ENCODE measurements at regions of chr17 and their contacts with region 1.

Region 1: GRCh38 chr17:7856883-7857723 is at the start of gene NAA38:
- DNase-seq: peak; percentile 80 to 100 (median 96)
- ATAC-seq: peak; percentile 78 to 91
- H3K4me3 Mint-ChIP-seq: no peak within 1 kb of the TSS
- H3K27ac Mint-ChIP-seq: no peak within 1 kb of the TSS
- H3K4me1 Mint-ChIP-seq: peaks cover under 1 to 17% (median 12%) of the 10 kb centered on the region in 4 donors
- H3K27me3 Mint-ChIP-seq: no peaks in the 10 kb centered on the region
- polyA plus RNA-seq, gene NAA38: 125 to 169 (median 152) TPM

Region 2: DNA sequence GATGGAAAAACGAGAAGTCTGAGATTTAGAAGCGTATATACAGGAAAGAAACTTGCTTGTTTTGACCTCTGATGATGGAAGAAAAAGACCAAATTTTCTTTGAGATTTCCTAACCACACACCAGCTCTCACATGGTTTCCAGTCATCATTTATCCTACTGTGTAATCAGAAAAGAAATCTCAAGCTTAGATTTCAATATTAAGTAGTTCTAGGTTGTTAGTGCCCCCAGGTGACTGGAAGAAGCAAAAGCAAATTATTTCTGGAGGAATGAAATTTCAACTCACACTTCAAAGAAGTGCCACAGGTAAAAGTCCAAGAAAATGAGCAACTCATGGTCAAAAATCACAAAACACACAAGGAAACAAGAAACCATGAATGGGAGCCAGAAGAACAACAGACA is 74.9 kb before region 1 on chr17:
- POLR2A ChIA-PET with region 1: no interaction called
- DNase-seq: no peak
- ATAC-seq: no peak
- H3K4me3 Mint-ChIP-seq: no peak overlapping the region
- H3K27ac Mint-ChIP-seq: no peak overlapping the region
- H3K4me1 Mint-ChIP-seq: no peaks in the 10 kb centered on the region
- H3K27me3 Mint-ChIP-seq: peaks cover 0 to 15% (median 3%) of the 10 kb centered on the region in 5 donors

Region 3: GRCh38 chr17:7834962-7835813 is 21.9 kb before region 1 on chr17:
- POLR2A ChIA-PET with region 1: interaction called, 103 read pairs
- DNase-seq: peak; percentile 77 to 97 (median 95)
- ATAC-seq: peak; percentile 54 to 64
- H3K4me3 Mint-ChIP-seq: peak overlapping the region; percentile 96 to 99 (median 98)
- H3K27ac Mint-ChIP-seq: peak overlapping the region; percentile 95 to 100 (median 100)
- H3K4me1 Mint-ChIP-seq: peaks cover 44 to 55% (median 47%) of the 10 kb centered on the region in 4 donors
- H3K27me3 Mint-ChIP-seq: peaks cover 0 to 2% (median 0%) of the 10 kb centered on the region in 5 donors

Region 4: GRCh38 chr17:7844292-7845154 is 12.6 kb before region 1 on chr17:
- POLR2A ChIA-PET with region 1: interaction called, 54 read pairs
- DNase-seq: peak; percentile 62 to 89 (median 78)
- ATAC-seq: peak; percentile 20 to 32
- H3K4me3 Mint-ChIP-seq: peak overlapping the region; percentile 88 to 100 (median 96)
- H3K27ac Mint-ChIP-seq: peak overlapping the region; percentile 94 to 100 (median 98)
- H3K4me1 Mint-ChIP-seq: peaks cover 34 to 52% (median 40%) of the 10 kb centered on the region in 4 donors
- H3K27me3 Mint-ChIP-seq: peaks cover 0 to 6% (median 0%) of the 10 kb centered on the region in 5 donors

Region 5: DNA sequence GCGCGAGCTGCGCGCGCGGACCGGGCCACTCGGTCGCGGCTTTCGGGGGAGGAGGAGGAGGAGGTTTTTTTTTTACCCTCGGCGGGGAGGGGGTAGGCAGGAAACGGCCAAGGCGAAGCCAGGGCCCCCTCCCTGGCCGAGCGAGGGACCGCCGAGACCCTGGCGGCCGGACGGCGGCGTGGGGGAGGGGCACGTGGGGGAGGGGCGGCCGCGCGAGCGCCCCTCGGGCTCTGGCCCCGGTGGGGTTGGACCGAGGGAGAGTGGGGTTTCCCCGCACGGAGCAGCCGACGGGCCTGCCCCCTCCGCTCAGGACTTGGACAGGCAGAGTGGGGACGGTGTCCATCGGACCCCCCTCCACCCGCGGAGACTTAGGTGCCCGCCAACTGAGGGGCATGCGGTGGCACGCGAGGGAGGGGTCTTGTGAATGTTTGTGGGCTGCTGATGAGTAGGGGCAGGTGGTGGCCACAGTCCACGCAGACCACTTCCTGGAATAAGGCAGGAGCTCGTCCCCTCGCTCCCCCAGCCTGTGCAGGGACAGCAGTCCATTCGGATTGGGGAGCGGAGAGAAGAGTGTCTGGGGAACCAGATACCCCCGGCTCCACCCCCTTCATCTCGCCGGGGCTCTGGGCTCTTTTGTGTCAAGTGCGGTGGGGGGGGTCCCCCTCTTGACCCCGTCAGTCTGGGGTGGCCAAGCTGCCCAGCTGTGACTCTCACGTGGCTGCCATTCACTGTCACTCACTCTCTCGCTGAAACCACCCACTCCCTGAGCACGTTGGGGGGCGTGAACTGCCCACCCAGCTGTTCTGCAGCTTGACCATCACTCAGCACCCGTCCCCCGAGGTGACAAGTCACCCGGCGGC is 28.5 kb after region 1 on chr17:
- POLR2A ChIA-PET with region 1: interaction called, 13 read pairs
- DNase-seq: peak in 6 of 10 donors; percentile 14 to 49 (median 42)
- ATAC-seq: peak in 1 of 2 donors; percentile 5
- H3K4me3 Mint-ChIP-seq: peak overlapping the region in 2 of 10 donors; percentile 43 to 76
- H3K27ac Mint-ChIP-seq: no peak overlapping the region
- H3K4me1 Mint-ChIP-seq: peaks cover 5 to 10% (median 6%) of the 10 kb centered on the region in 4 donors
- H3K27me3 Mint-ChIP-seq: no peaks in the 10 kb centered on the region

Region 6: DNA sequence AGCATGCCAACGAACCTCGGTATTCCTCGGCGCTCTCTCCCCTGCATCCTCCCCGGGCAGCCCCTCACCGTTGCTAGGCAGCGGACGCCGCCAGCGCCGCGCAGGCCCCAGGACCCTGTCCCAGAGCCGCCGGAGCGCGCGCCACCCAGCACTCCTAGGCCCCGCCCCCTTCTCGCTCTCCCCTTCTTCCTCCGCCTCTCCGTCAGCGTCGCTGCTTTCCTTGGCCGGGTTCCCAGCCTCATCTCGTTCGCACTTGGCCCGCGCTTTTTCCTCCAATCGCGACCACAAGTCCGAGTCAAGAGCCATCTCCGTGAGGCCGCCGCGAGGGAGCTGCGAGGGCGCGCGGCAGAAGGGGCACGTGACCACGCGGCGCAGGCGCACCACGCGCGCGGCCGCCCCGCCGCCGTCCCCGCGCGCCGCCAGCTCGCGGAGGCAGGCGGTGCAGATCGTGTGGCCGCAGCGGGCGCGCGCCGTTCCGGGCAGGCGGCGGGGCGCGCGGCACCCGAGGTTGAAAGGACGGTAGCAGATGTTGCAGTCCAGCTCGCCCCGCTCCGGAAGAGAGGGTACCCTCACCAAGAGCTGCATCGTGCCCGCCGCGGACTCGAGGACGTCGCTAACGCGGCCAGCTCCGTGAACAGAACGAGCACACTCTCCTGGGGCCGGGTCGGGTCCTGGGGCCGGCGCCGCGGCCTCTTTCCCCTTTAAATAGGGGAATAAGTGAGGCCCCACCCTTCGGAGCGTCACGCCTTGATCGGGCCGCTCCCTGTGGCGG is 58.7 kb after region 1 on chr17 and contains the start of gene RNF227:
- POLR2A ChIA-PET with region 1: interaction called, 16 read pairs
- DNase-seq: peak; percentile 61 to 91 (median 80)
- ATAC-seq: peak; percentile 79 to 83
- H3K4me3 Mint-ChIP-seq: peak within 1 kb of the TSS; percentile 86 to 93 (median 90)
- H3K27ac Mint-ChIP-seq: peak within 1 kb of the TSS; percentile 86 to 96 (median 94)
- H3K4me1 Mint-ChIP-seq: peaks cover 26 to 42% (median 32%) of the 10 kb centered on the region in 4 donors
- H3K27me3 Mint-ChIP-seq: no peaks in the 10 kb centered on the region
- polyA plus RNA-seq, gene RNF227: 0.65 to 4.8 (median 2.4) TPM

Region 7: DNA sequence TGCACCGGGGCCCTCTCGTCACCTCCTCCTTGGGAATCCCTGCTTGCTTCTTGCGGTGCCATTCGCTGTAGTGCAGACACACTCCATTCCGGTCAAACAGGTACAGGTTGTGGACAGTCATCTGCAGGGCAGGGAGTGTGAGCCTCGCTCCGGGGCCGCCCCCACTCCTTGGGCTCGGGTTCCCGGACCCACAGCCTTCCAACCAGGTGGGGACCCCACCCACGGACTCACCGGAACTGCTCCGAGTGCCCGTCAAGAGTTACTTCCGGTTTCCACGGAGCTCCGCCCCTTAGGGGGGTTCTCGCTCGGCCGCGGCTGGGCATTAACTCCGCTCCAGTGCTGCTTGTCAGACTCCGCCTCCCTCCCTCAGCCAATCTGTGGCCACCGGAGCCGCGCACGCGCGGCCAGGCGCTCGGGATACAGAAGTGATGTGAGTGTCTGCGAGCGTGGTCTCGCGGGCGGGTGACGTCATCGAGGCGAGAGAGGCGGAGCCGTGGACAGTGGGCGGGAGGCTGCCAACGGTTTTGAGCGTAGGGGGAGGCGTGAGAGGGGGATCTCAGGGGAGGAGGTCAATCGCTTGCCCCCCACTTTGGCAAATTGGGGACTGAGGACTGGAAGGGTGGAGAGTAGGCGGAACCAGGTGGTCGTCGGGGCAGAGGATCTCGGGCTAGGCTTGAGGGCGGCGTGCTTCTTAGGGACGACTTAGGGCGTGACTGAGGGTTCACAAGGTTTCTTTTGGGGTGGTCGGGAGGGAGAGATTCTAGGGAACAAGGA is 74.8 kb after region 1 on chr17 and contains the starts of genes CNTROB and TRAPPC1:
- POLR2A ChIA-PET with region 1: interaction called, 21 read pairs
- DNase-seq: peak; percentile 97 to 100 (median 99)
- ATAC-seq: peak; percentile 96 to 97
- H3K4me3 Mint-ChIP-seq: peak within 1 kb of the TSS; percentile 87 to 100 (median 98)
- H3K27ac Mint-ChIP-seq: peak within 1 kb of the TSS; percentile 91 to 99 (median 97)
- H3K4me1 Mint-ChIP-seq: peaks cover 28 to 56% (median 51%) of the 10 kb centered on the region in 4 donors
- H3K27me3 Mint-ChIP-seq: no peaks in the 10 kb centered on the region
- polyA plus RNA-seq, gene CNTROB: 7.6 to 18.5 (median 12.4) TPM
- polyA plus RNA-seq, gene TRAPPC1: 199 to 219 (median 205) TPM